ENCODE measurements at regions of chr5 and their contacts with region 1.

Region 1: DNA sequence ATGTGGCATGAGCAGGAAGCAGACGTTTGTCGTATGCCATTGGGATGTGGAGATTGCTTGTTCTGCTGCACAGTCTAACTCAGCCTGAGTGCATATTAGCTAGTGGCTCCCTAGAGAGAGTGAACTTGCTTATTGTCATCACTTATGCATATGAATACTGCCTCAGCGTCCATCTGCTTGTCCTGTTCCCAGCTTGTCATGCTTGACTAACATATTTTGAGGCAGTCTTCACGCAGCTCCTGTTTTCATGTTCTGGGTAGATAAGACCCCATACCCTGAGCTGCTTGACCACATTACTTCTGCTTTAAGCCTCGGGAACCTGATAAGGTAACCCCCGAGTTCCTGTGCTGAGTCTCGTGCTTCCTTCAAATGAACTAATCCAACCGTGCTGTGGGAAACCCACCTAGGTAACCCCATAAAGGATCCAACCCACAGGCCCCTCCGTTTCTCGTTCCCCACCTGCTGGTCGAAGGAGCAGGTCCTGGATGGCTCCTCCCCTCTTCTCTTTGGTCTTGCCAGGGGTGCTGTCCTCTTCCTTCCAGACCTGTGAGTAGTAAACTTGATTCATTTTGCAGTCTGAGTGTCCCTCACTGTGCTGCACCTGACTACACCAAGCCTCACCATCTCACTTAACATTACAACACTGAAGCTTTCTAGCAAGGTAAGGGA is 25.0 kb downstream of the ANKRD33B start:
- H3K4me3 Mint-ChIP-seq: no peak overlapping the region
- H3K27ac Mint-ChIP-seq: no peak overlapping the region
- H3K4me1 Mint-ChIP-seq: peaks cover 19% of the 10 kb centered on the region
- H3K27me3 Mint-ChIP-seq: peaks cover 31% of the 10 kb centered on the region

Region 2: DNA sequence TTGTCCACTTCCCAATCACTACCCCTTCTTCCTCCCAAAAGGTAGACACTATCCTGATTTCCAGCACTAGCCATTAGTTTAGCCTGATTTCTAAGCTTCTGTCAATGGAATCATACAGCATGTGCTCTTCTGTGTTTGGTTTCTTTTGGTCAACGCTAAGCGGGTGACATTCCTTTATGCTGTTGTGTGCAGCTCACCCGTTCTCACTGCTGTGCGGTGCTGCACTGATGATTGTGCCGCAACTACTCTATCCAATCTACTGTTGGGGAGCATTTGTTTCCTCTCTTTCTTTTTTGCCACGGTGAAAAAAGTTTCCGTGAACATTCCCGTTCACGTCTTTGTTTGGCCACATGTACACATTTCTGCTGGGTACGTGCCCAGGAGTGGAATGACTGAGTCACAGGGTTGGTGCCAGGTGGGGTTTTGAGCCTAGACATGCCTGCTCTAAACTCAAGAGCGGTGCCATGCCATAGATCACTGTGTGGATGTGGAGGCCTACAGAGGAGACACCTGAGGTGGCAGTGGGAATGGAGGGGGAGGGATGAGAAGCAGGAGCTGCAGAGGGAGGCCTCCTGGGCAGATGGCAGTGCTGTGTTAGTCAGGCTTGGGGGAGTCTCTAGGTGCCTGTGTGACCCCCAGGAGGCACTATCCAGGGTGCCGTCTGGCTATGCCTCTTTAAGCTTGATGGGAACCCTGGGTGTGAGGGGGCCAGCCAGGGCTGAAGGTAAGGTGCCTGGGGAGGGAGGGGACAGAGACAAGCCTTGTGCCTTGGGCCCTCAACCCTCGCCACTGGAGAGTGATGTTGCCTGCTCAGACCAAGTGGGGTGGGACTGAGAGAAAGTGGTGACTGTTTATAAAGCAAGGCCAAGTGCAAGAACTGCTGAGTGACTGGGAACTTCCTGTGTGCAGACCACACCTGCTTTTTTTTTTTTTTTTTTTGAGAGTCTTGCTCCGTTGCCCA is 36.5 kb before region 1 on chr5:
- intact Hi-C with region 1: loop called (anchors 5 kb)
- H3K4me3 Mint-ChIP-seq: no peak overlapping the region
- H3K27ac Mint-ChIP-seq: no peak overlapping the region
- H3K4me1 Mint-ChIP-seq: peaks cover 30% of the 10 kb centered on the region
- H3K27me3 Mint-ChIP-seq: peaks cover 26% of the 10 kb centered on the region

Region 3: DNA sequence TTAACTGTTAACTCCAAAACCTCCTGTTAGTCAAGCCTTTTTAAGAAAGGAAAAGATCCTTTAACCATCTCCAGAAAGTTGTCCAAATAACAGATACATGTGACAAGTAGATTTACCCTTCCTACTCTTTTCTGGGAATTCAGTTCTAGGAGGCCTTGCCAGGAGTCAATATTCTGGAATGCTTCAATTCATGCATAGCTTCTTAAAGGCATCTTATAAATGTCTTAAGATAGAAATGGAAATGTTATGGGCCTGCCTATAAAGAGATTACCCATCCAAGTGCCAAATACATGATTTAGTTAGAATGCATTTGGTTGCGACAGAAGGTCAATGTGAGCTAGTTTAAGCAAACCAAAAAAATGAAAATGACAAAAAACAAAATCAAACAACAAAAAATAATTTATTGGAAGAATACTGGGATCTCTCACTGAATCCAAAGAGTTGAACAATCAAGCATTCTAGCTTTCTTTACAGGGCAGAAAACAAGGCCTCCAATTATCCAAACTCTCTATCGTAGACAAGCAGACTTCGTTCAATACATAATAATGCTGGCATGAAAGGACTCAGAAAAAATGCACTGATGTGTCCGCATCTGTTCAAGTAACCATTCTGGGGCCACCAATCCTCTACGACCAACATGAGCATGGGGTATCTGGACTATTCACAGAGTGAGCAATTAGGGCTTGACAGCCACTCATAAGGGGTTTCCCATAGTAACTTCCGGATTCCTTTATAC is 1126.7 kb after region 1 on chr5:
- intact Hi-C with region 1: no loop called
- H3K4me3 Mint-ChIP-seq: no peak overlapping the region
- H3K27ac Mint-ChIP-seq: no peak overlapping the region
- H3K4me1 Mint-ChIP-seq: no peaks in the 10 kb centered on the region
- H3K27me3 Mint-ChIP-seq: no peaks in the 10 kb centered on the region

Measured in dendritic cell treated with granulocyte-macrophage colony-stimulating factor and Interleukin-4, amounts not matched to agents 40 ng/mL and 50 ng/mL, for 4 days (primary cell).